WTC11 (cell line): ENCODE measurements at regions of chr11 and their contacts with region 1.

Region 1: DNA sequence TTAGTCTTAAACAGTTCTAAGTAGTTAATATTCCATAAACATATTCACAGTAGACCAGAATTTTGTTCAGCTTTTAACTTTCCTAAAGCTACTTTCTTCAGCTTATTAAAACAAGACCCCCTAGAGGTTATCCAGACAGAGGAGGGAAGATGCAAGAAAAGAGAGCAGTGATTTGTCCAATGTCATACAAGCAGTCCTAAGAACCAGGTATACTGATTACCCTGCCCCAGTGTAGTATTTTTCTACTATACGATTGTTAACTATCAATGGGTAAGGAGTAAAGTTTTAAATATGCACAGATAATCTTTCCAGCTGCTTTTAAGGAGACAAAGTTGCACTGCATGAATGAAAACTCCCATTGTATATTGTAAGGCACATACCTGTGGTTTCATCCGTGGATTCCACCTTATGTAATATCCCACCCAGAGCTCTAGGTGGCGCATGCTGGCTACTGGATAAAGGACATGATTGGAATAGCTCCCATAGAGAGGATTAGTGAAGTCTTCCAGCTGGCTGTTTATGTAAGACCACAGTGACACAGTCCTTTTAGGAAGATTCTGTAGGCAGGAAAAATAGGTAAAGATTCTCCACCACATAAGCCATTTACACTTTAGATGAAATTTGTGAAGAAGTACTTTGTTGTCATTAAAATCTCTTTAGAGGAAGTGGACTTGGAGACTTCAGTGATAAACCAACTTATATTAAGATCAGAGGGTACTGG is 45.6 kb downstream of the CEP57 start:
- DNase-seq: peak; percentile 65
- ATAC-seq: peak; percentile 99
- H3K4me3 Mint-ChIP-seq: no peak overlapping the region
- H3K27ac Mint-ChIP-seq: no peak overlapping the region
- H3K4me1 Mint-ChIP-seq: no peaks in the 10 kb centered on the region
- H3K27me3 Mint-ChIP-seq: no peaks in the 10 kb centered on the region
- CTCF ChIP-seq: peak; percentile 78

Region 2: GRCh38 chr11:95705485-95706124 is 130.3 kb before region 1 on chr11:
- CTCF ChIA-PET with region 1: no interaction called
- POLR2A ChIA-PET with region 1: no interaction called
- DNase-seq: peak; percentile 87
- ATAC-seq: peak; percentile 99
- H3K4me3 Mint-ChIP-seq: no peak overlapping the region
- H3K27ac Mint-ChIP-seq: no peak overlapping the region
- H3K4me1 Mint-ChIP-seq: no peaks in the 10 kb centered on the region
- H3K27me3 Mint-ChIP-seq: peaks cover 2% of the 10 kb centered on the region; the same call in 1 of the 2 replicates
- CTCF ChIP-seq: peak; percentile 91

Region 3: DNA sequence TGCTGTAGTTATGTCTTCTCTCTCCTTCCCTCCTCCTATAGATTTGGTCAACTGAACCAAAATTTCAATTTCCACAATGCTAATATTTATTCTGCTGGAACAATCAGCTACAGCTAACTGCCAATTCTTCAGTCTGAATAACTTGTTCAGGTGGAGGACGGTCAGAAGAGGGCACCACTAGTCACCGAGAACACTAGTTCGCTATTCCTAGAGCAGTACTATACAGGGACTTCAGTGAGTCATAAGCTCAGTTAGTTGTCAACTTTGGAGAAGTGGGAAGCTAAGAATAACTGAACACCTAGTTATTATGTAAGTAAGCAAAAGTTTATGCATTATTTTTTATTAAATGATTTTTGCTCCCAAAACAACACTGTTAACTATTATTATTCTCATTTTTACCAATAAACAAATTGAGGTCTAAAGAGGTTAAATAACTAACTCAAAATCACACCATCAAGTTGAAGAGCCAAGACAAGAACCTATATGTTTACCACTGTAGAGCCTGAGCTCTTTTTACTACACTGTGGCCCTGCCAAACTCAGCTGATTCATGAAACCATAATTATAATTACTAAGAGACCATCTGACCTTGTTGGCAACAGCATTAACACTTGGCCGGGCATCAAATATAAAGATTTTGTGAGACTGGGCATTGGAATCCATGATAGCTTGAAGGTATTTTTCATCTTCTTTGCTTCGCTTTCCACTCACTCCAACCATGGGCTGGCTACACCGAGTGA is 13.3 kb after region 1 on chr11:
- CTCF ChIA-PET with region 1: interaction called, 18 read pairs
- POLR2A ChIA-PET with region 1: no interaction called
- DNase-seq: peak; percentile 30
- ATAC-seq: peak; percentile 96
- H3K4me3 Mint-ChIP-seq: no peak overlapping the region
- H3K27ac Mint-ChIP-seq: no peak overlapping the region
- H3K4me1 Mint-ChIP-seq: no peaks in the 10 kb centered on the region
- H3K27me3 Mint-ChIP-seq: no peaks in the 10 kb centered on the region
- CTCF ChIP-seq: no peak

Region 4: DNA sequence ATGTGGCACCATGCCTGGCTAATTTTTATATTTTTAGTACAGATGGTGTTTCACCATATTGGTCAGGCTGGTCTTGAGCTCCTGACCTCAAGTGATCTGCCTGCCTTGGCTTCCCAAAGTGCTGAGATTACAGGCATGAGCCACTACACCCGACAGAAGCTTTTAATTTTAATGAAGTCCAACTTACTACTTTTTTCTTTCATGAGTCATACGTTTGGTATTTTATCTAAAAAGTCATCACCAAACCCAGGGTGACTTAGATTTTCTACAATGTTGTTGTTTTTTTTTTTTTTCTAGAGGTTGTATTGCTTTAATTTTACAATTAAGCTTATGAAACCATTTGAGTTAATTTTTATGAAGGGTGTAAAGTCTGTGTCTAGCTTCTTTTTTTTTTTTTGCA is 588.8 kb after region 1 on chr11:
- CTCF ChIA-PET with region 1: interaction called, 21 read pairs
- POLR2A ChIA-PET with region 1: no interaction called
- DNase-seq: no peak
- ATAC-seq: no peak
- H3K4me3 Mint-ChIP-seq: no peak overlapping the region
- H3K27ac Mint-ChIP-seq: no peak overlapping the region
- H3K4me1 Mint-ChIP-seq: peaks cover 7% of the 10 kb centered on the region
- H3K27me3 Mint-ChIP-seq: no peaks in the 10 kb centered on the region
- CTCF ChIP-seq: no peak